ENCODE measurements at regions of chr6 and their contacts with region 1.

Region 1: GRCh38 chr6:72132427-72132826 is 246.1 kb downstream of the RIMS1 start:
- DNase-seq: no peak
- ATAC-seq: no peak
- H3K4me3 ChIP-seq: no peak overlapping the region
- H3K4me3 Mint-ChIP-seq: no peak overlapping the region
- H3K27ac ChIP-seq: no peak overlapping the region
- H3K27ac Mint-ChIP-seq: no peak overlapping the region
- H3K4me1 ChIP-seq: no peaks in the 10 kb centered on the region
- H3K4me1 Mint-ChIP-seq: no peaks in the 10 kb centered on the region
- H3K27me3 ChIP-seq: no peaks in the 10 kb centered on the region
- H3K27me3 Mint-ChIP-seq: no peaks in the 10 kb centered on the region

Region 2: DNA sequence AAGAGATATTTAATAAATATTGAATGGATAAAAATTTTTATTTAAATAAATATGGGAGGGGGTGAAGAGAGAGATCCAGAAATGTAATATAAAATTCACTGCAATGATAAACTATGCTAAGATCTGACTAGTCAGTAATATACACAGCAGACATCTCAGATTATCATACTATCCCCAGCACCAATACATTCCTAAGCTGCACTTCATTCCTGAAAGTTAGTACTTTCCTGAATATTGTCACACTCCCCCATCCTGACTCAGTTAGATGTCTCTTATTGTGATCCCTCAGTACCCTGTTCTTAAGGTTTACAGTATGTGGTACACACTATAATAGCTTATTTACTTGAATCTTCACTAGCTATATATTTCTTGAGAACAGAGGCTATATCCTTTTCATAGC is 401.2 kb after region 1 on chr6:
- CTCF ChIA-PET with region 1: no interaction called
- POLR2A ChIA-PET with region 1: interaction called in 1 of 2 experiments, 10 read pairs
- DNase-seq: no peak
- ATAC-seq: no peak
- H3K4me3 ChIP-seq: no peak overlapping the region
- H3K4me3 Mint-ChIP-seq: no peak overlapping the region
- H3K27ac ChIP-seq: no peak overlapping the region
- H3K27ac Mint-ChIP-seq: no peak overlapping the region
- H3K4me1 ChIP-seq: no peaks in the 10 kb centered on the region
- H3K4me1 Mint-ChIP-seq: no peaks in the 10 kb centered on the region
- H3K27me3 ChIP-seq: no peaks in the 10 kb centered on the region
- H3K27me3 Mint-ChIP-seq: peaks cover 3 to 19% of the 10 kb centered on the region in 2 donors